Activated naive CD4-positive, alpha-beta T cell treated with anti-CD3 and anti-CD28 coated beads, Interleukin-2, amount 10 ng/mL, durations not matched to agents 7 days and 5 days (primary cell): ENCODE measurements at regions of chr20 and their contacts with region 1.

Region 1: GRCh38 chr20:39067526-39068216 is 105.5 kb downstream of the DHX35 start:
- DNase-seq: no peak
- H3K4me3 Mint-ChIP-seq: no peak overlapping the region
- H3K27ac Mint-ChIP-seq: no peak overlapping the region
- H3K4me1 Mint-ChIP-seq: no peaks in the 10 kb centered on the region
- H3K27me3 Mint-ChIP-seq: peaks cover 37% of the 10 kb centered on the region

Region 2: DNA sequence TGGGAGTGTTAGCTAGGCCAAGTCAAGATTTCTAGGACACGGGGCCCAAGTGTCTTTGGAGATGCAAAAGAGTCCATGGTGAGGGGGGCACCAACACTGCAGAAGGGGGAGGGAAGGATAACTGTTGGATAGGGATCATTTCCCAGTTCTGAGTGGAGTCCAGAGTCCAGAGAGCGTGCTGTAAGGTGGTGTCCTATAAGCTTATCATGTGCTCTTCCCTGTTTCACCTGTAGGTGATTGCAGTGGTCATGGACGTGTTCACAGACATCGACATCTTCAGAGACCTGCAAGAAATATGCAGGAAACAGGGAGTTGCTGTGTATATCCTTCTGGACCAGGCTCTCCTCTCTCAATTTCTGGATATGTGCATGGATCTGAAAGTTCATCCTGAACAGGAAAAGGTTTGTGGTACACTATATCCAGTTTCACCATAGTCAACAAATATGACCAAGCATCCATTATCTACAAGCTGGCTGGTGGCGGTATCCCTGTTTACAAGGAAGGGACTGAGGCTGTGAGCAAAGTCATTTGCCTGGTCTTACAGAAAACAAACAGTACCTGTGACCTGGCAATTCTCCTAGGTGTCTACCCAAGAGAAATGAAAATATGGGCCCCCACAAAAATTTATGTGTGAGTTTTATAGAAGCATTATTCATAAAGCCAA is 125.8 kb before region 1 on chr20:
- CTCF ChIA-PET with region 1: no interaction called
- DNase-seq: no peak
- H3K4me3 Mint-ChIP-seq: no peak overlapping the region
- H3K27ac Mint-ChIP-seq: peak overlapping the region; percentile 65
- H3K4me1 Mint-ChIP-seq: peaks cover 4% of the 10 kb centered on the region
- H3K27me3 Mint-ChIP-seq: no peaks in the 10 kb centered on the region

Region 3: GRCh38 chr20:39081255-39081654 is 13.6 kb after region 1 on chr20:
- CTCF ChIA-PET with region 1: interaction called, 13 read pairs
- DNase-seq: peak; percentile 89
- H3K4me3 Mint-ChIP-seq: no peak overlapping the region
- H3K27ac Mint-ChIP-seq: no peak overlapping the region
- H3K4me1 Mint-ChIP-seq: peaks cover 2% of the 10 kb centered on the region
- H3K27me3 Mint-ChIP-seq: peaks cover 40% of the 10 kb centered on the region